Activated naive CD4-positive, alpha-beta T cell treated with anti-CD3 and anti-CD28 coated beads for 36 hours (primary cell): ENCODE measurements at regions of chr9 and their contacts with region 1.

Region 1: GRCh38 chr9:107413315-107413714 is 76.3 kb downstream of the KLF4 start:
- DNase-seq: no peak
- H3K4me3 Mint-ChIP-seq: no peak overlapping the region
- H3K27ac Mint-ChIP-seq: no peak overlapping the region
- H3K4me1 Mint-ChIP-seq: no peaks in the 10 kb centered on the region
- H3K27me3 Mint-ChIP-seq: peaks cover 6% of the 10 kb centered on the region

Region 2: DNA sequence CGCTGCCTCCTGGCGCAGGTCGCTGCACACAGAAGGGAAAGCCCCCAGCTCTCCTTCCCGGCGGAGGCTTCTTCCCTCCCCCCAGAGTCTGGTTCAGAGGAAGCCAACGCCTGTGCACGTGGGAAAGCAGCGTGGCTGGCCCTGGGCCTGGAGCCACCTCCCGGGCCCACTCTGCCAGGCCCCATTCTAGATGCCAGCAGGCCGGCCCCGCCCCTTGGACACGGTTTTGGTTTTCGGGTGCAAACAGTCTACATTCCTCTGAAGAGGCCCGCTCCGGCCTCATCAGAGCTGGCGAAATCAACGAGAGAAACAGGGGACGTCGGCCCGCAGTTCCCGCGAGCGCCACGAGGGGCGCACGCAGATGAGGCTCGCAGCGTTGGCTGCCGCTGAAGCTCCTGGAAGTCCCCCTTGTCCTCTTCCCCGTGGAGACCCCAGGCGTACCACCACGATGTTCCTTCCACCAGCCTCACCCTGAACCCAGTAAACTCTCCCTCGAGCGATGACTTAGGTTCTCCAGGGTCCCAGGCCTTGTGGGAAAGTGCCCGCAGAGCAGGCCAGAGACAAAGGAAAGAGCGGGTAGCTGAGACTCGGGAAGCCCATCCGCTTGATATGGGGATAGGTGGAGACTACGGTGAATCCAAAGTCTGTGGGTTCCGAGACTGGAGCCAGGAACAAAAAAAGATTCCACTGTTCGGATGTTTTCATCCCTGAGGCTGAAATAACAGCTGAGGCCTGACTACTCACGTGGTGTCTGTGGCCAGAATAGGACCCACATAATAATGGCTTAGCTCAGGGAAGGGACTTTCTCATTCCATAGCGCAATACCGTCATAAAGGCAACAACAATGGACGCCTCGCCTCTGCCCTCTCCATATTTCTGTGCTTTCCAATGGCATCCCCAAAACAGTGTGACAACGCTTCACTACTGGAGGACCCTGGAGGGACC is 12.1 kb after region 1 on chr9:
- CTCF ChIA-PET with region 1: interaction called, 10 read pairs
- intact Hi-C with region 1: no loop called
- DNase-seq: peak; percentile 58
- H3K4me3 Mint-ChIP-seq: peak overlapping the region; percentile 39
- H3K27ac Mint-ChIP-seq: no peak overlapping the region
- H3K4me1 Mint-ChIP-seq: peaks cover 8% of the 10 kb centered on the region
- H3K27me3 Mint-ChIP-seq: peaks cover 23% of the 10 kb centered on the region